Heart right ventricle (tissue), 16 donors: ENCODE measurements at regions of chr17 and their contacts with region 1.

Region 1: GRCh38 chr17:59311130-59311920 is 20.1 kb upstream of the YPEL2 start:
- DNase-seq: peak in 1 of 2 donors; percentile 56
- ATAC-seq: peak; percentile 84 to 97 (median 94)
- H3K4me3 ChIP-seq: no peak overlapping the region
- H3K27ac ChIP-seq: no peak overlapping the region
- H3K4me1 ChIP-seq: peaks cover 0 to 14% (median 0%) of the 10 kb centered on the region in 9 donors
- H3K27me3 ChIP-seq: no peaks in the 10 kb centered on the region
- CTCF ChIP-seq: peak; percentile 63 to 90 (median 86)

Region 2: DNA sequence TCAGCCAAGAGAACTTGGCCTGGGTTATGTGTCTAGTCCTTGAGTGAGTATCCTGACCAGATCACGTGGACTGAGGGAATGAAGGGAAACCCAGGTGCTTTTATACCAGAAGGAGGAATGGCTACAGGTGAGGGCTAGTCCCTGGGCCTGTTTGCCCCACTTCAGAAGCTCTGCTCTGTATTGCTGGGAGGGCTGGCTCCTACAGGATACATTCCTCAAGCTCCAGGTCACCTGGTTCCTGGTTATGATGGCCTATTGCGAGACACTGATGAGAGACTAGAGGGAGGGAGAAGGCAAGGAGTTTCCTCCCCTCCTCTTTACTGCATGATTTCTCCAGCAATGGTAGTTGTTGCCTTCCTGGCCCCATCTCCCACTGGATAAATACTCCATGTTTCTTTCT is 120.5 kb before region 1 on chr17:
- intact Hi-C with region 1: no loop called
- DNase-seq: no peak
- ATAC-seq: no peak
- H3K4me3 ChIP-seq: no peak overlapping the region
- H3K27ac ChIP-seq: no peak overlapping the region
- H3K4me1 ChIP-seq: no peaks in the 10 kb centered on the region
- H3K27me3 ChIP-seq: no peaks in the 10 kb centered on the region
- CTCF ChIP-seq: no peak

Region 3: GRCh38 chr17:59267776-59268175 is 43.5 kb before region 1 on chr17:
- intact Hi-C with region 1: no loop called
- DNase-seq: no peak
- ATAC-seq: no peak
- H3K4me3 ChIP-seq: no peak overlapping the region
- H3K27ac ChIP-seq: no peak overlapping the region
- H3K4me1 ChIP-seq: peaks cover 0 to 7% (median 0%) of the 10 kb centered on the region in 9 donors
- H3K27me3 ChIP-seq: no peaks in the 10 kb centered on the region
- CTCF ChIP-seq: no peak

Region 4: GRCh38 chr17:59435238-59435637 is 123.9 kb after region 1 on chr17:
- intact Hi-C with region 1: loop called in 6 of 10 experiments (anchors 1 to 5 kb)
- DNase-seq: no peak
- ATAC-seq: peak in 1 of 8 donors; percentile 34
- H3K4me3 ChIP-seq: no peak overlapping the region
- H3K27ac ChIP-seq: peak overlapping the region in 1 of 10 donors; percentile 29
- H3K4me1 ChIP-seq: peaks cover 2 to 70% (median 31%) of the 10 kb centered on the region in 9 donors
- H3K27me3 ChIP-seq: no peaks in the 10 kb centered on the region
- CTCF ChIP-seq: no peak

Region 5: GRCh38 chr17:59440784-59441441 is 129.6 kb after region 1 on chr17:
- intact Hi-C with region 1: loop called (anchors 1 to 5 kb)
- DNase-seq: peak; percentile 74 to 96
- ATAC-seq: peak; percentile 88 to 96 (median 94)
- H3K4me3 ChIP-seq: peak overlapping the region in 5 of 10 donors; percentile 13 to 25 (median 16)
- H3K27ac ChIP-seq: peak overlapping the region in 9 of 10 donors; percentile 49 to 84 (median 81)
- H3K4me1 ChIP-seq: peaks cover 5 to 61% (median 35%) of the 10 kb centered on the region in 9 donors
- H3K27me3 ChIP-seq: no peaks in the 10 kb centered on the region
- CTCF ChIP-seq: peak; percentile 78 to 96 (median 89)

Region 6: DNA sequence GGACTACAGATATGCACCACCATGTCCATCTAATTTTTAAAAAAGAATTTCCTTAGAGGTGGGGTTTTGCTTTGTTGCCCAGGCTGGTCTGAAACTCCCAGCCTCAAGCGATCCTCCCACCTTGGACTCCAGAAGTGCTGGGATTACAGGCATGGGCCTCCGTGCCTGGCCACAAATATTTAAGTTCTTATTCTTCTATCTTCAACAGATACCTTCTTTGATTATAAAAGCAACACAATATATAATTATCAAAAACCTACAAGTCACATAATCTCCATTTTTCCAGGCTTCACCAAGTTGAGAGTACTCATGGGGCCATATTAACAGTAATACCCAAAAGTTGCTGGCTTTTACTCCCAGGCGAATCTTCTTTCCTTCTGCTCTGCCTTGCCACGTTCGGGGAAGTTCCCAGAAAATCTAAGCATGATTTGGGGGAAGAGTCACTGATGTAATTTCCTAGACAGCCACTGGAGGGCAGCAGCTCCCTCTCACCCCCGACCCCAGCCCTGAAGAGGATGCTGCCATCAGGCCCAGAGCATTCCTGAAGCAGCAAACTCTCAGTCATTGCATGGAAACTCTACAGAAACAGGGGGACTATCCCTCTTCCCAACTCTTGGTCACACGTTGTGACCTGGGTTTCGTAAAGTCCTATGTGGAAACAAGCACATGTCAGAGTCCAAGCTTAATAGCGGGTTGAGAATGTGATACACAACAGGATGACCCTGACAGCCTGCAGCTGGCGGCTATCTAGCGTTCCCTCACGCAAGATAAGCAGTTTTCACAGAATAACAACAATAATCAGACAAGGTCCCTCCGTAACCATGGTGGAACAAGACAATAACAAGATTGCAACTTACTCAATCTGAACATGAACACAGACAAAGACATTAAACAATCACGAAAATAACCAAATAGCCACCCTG is 210.1 kb after region 1 on chr17:
- intact Hi-C with region 1: loop called in 4 of 10 experiments (anchors 2 to 10 kb)
- DNase-seq: peak; percentile 23 to 35
- ATAC-seq: peak in 6 of 8 donors; percentile 38 to 81 (median 64)
- H3K4me3 ChIP-seq: no peak overlapping the region
- H3K27ac ChIP-seq: no peak overlapping the region
- H3K4me1 ChIP-seq: peaks cover 0 to 16% (median 5%) of the 10 kb centered on the region in 9 donors
- H3K27me3 ChIP-seq: no peaks in the 10 kb centered on the region
- CTCF ChIP-seq: peak; percentile 76 to 90 (median 87)

Region 7: DNA sequence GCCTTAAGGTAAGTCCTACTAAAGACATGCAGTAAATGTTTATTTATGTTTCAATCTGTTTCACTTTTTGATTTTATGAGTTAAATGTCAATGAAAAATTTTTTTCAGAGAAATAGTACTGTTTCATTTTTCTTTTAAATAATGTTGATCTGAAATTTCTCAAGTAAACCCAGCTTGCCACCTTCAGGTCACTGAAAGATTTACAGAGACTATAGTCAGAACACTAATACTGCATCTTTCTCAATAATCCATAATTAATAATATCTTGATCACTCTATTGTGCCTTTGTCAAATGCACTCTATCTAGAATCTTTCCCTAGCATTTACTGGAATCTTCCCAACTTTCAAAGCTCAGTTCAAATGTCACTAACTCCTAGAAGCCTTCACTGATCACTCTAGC is 247.7 kb after region 1 on chr17:
- intact Hi-C with region 1: loop called in 6 of 10 experiments (anchors 5 to 10 kb)
- DNase-seq: no peak
- ATAC-seq: no peak
- H3K4me3 ChIP-seq: no peak overlapping the region
- H3K27ac ChIP-seq: no peak overlapping the region
- H3K4me1 ChIP-seq: no peaks in the 10 kb centered on the region
- H3K27me3 ChIP-seq: no peaks in the 10 kb centered on the region
- CTCF ChIP-seq: peak in 6 of 9 donors; percentile 22 to 48 (median 28)

Region 8: DNA sequence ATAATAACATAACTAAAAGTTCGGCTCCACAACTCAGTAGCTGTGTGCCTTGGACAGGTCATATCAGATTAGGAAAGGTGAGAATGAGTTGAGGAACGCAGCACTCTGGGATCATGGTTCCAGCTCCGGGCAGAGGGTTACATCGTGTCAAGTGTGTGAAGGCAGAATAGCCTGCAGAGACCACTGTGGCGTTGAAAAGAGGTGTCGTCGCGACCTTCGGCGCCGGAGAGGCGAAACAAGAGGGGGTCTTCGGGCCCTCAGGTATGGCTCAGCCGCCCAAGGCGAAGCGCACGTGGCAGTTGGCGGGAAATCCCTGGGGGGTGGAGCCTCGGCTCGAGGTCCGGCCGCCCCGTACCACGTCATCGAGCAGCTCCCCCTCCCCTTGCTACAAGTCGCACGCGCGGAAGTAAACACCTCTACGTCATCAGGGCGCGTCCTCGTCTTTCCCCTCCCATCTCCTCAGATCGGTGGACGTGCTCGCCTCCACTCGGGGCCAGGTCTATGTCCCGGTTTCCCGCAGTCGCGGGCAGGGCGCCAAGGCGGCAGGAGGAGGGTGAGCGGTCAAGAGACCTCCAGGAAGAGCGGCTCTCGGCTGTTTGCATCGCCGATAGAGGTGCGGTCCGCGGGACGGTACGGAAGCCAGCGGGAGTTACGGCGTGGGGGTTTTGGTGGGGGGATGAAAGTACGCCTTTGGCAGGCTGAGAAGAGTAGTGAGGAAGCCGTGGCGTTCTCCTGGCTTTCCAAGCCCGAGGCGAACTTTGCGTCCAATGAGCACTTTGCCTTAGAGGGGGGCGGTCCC is 254.0 kb after region 1 on chr17 and contains the start of gene DHX40:
- intact Hi-C with region 1: loop called in 5 of 10 experiments (anchors 5 to 10 kb)
- DNase-seq: peak; percentile 91 to 96
- ATAC-seq: peak; percentile 97 to 100 (median 99)
- H3K4me3 ChIP-seq: peak within 1 kb of the TSS; percentile 74 to 97 (median 90)
- H3K27ac ChIP-seq: peak within 1 kb of the TSS in 9 of 10 donors; percentile 64 to 93 (median 81)
- H3K4me1 ChIP-seq: peaks cover 0 to 18% (median 13%) of the 10 kb centered on the region in 9 donors
- H3K27me3 ChIP-seq: no peaks in the 10 kb centered on the region
- CTCF ChIP-seq: no peak
- total RNA-seq, gene DHX40: 14.2 to 22.9 (median 20.7) TPM